Vagina (tissue), 2 donors: ENCODE measurements at regions of chr22 and their contacts with region 1.

Region 1: DNA sequence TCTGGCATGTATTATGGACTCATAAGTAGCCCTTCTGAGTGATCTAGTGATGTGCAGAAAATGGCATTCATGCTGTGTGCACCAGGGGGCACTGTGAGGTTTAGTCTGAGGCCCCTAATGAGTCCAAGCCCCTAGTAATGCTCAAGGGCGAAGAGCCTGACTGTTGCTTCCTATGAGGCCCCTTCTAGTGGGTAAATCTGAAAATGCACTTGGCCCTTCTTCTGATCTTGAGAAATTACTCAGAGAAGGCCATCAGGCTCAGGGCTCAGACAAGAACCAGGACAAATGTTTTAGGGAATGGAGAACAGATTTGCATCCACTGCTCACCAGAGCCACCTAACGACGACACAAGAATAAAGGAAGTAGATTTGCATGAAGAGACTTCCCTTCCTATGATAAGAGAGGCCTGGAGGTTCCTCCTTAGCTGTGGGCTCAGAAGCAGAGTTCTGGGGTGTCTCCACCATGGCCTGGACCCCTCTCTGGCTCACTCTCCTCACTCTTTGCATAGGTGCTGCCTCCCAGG is 75.8 kb downstream of the GGTLC2 start:
- DNase-seq: no peak
- H3K4me3 ChIP-seq: no peak overlapping the region
- H3K27ac ChIP-seq: no peak overlapping the region
- H3K4me1 ChIP-seq: no peaks in the 10 kb centered on the region
- H3K27me3 ChIP-seq: no peaks in the 10 kb centered on the region
- CTCF ChIP-seq: peak in 1 of 3 experiments; percentile 19
- POLR2A ChIP-seq: no peak

Region 2: DNA sequence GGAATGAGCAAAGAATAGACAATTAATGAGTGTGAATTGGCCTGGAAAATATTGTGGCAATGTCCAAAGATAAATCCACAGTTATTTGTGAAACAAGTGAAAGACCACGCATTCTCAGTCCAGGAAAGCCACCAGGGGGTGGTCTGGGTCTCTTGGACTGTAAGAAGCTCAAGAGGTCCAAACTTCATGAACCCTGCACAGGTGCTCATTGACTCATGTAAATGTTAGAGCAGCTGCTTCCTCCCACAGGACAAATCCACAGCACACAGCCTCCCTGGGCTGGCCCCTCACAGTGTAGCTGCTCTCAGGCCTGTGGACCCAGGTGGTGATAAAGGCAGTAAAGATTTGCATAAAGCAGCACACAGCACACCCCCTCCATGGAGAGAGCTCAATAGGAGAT is 325.7 kb before region 1 on chr22:
- intact Hi-C with region 1: no loop called
- DNase-seq: peak; percentile 34 to 42
- H3K4me3 ChIP-seq: no peak overlapping the region
- H3K27ac ChIP-seq: no peak overlapping the region
- H3K4me1 ChIP-seq: no peaks in the 10 kb centered on the region
- H3K27me3 ChIP-seq: no peaks in the 10 kb centered on the region
- CTCF ChIP-seq: no peak
- POLR2A ChIP-seq: no peak

Region 3: DNA sequence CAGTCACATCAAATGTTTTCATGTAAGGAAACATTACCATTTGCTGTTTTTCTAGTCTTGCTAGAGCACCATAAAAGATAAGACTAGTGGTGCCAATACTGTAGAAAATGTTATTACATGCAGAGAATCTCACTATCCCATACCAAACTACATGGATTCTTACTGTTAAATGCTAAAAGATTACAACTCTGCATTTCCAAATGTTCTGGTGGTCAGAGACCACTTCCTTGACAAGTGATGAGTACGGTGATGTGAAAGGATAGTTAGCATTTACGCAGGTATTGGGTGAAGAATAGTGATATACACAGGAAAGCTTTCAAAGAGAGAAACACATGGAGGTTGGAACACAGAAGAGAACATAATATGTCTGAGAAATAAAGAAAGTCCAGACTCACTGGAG is 22.4 kb after region 1 on chr22:
- intact Hi-C with region 1: loop called (anchors 1 kb)
- DNase-seq: no peak
- H3K4me3 ChIP-seq: no peak overlapping the region
- H3K27ac ChIP-seq: no peak overlapping the region
- H3K4me1 ChIP-seq: no peaks in the 10 kb centered on the region
- H3K27me3 ChIP-seq: no peaks in the 10 kb centered on the region
- CTCF ChIP-seq: no peak
- POLR2A ChIP-seq: no peak

Region 4: DNA sequence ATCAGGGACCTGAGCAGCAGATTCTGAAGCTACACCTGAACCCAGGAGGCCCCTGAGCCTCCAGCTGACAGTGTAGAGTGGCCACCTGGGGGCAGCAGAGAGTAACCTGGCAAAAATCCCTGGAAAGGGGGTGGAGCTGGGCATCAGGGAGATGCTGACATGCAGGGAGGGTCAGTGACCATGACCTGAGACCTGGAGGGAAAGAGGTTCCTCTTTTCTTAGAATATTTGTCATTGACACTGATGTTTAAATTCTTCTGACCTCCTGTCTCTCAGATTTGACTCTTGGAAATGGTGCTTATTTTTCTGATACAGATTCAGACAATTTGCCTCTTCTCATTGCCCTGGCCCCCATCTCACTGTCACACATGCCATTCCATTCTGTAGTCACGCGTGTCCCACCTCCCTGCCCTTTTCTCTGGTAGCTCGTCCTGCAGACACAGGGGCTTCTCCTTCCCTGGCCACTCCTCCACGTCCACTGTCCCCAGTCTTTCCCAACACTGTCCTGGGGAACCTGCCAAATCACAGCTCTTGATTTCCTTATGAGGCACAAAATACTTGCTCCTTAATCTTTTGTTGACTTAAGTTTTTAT is 50.1 kb after region 1 on chr22:
- intact Hi-C with region 1: no loop called
- DNase-seq: peak; percentile 69 to 87
- H3K4me3 ChIP-seq: no peak overlapping the region
- H3K27ac ChIP-seq: no peak overlapping the region
- H3K4me1 ChIP-seq: no peaks in the 10 kb centered on the region
- H3K27me3 ChIP-seq: no peaks in the 10 kb centered on the region
- CTCF ChIP-seq: peak in 1 of 3 experiments; percentile 1
- POLR2A ChIP-seq: no peak